ENCODE measurements at regions of chr7 and their contacts with region 1.

Region 1: GRCh38 chr7:117085769-117086463 is 132.6 kb downstream of the ST7 start:
- DNase-seq: no peak
- ATAC-seq: no peak
- H3K4me3 ChIP-seq: no peak overlapping the region
- H3K4me3 Mint-ChIP-seq: no peak overlapping the region
- H3K27ac ChIP-seq: no peak overlapping the region
- H3K27ac Mint-ChIP-seq: no peak overlapping the region
- H3K4me1 ChIP-seq: peaks cover 6% of the 10 kb centered on the region
- H3K4me1 Mint-ChIP-seq: peaks cover 42% of the 10 kb centered on the region
- H3K27me3 ChIP-seq: no peaks in the 10 kb centered on the region
- H3K27me3 Mint-ChIP-seq: no peaks in the 10 kb centered on the region
- CTCF ChIP-seq: no peak

Region 2: DNA sequence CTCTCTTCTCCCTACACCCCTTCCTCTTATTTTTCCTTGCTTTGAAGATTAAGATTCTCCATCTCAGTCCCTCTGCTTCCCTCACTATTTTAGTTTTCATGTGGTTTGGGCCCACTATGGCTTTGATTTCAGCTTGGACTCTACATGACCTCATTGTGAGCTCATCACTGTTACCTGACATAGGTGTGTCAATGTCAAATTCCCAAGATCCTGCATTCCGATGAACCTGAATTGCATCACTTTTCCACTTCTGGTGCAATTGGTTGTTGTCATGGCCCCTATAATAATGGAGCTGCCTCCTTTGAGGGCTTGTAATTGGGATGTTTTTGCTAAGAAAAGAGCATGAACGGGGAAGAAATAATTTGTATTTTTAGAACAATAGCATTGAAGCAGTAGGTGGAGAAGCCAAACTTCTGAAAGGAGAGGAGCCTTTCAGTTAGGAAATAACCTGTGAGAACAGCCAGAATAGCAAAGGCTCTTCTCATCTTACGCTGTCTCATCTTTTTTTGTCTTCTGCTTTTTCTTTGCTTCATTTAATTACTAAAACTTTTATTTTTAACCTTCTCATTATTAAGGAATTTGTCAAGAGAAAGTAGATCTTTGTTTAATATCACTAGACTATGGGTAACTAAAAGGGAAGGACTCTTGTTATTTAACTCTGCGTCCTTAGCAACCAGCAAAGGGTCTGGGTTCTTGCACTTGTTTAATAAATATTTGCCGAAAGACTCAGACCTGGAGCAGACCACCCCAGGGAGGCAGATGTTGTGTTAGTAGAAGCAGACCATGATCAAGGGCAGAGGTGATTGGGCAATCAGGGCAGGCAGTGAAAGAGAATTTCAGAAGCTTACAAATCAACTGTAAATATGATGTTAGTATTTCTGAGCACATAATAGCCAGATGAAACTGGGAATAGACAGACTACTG is 780.2 kb before region 1 on chr7:
- CTCF ChIA-PET with region 1: no interaction called
- POLR2A ChIA-PET with region 1: no interaction called
- intact Hi-C with region 1: no loop called
- DNase-seq: no peak
- ATAC-seq: no peak
- H3K4me3 ChIP-seq: no peak overlapping the region
- H3K4me3 Mint-ChIP-seq: no peak overlapping the region
- H3K27ac ChIP-seq: no peak overlapping the region
- H3K27ac Mint-ChIP-seq: no peak overlapping the region
- H3K4me1 ChIP-seq: no peaks in the 10 kb centered on the region
- H3K4me1 Mint-ChIP-seq: no peaks in the 10 kb centered on the region
- H3K27me3 ChIP-seq: peaks cover 0 to 4% of the 10 kb centered on the region in 2 experiments
- H3K27me3 Mint-ChIP-seq: peaks cover 9% of the 10 kb centered on the region
- CTCF ChIP-seq: no peak

Region 3: GRCh38 chr7:117034851-117035464 is 51.0 kb before region 1 on chr7:
- CTCF ChIA-PET with region 1: no interaction called
- POLR2A ChIA-PET with region 1: no interaction called
- intact Hi-C with region 1: loop called in 1 of 2 experiments (anchors 2 kb)
- DNase-seq: no peak
- ATAC-seq: no peak
- H3K4me3 ChIP-seq: no peak overlapping the region
- H3K4me3 Mint-ChIP-seq: no peak overlapping the region
- H3K27ac ChIP-seq: no peak overlapping the region
- H3K27ac Mint-ChIP-seq: no peak overlapping the region
- H3K4me1 ChIP-seq: no peaks in the 10 kb centered on the region
- H3K4me1 Mint-ChIP-seq: no peaks in the 10 kb centered on the region
- H3K27me3 ChIP-seq: no peaks in the 10 kb centered on the region
- H3K27me3 Mint-ChIP-seq: no peaks in the 10 kb centered on the region
- CTCF ChIP-seq: no peak

Region 4: DNA sequence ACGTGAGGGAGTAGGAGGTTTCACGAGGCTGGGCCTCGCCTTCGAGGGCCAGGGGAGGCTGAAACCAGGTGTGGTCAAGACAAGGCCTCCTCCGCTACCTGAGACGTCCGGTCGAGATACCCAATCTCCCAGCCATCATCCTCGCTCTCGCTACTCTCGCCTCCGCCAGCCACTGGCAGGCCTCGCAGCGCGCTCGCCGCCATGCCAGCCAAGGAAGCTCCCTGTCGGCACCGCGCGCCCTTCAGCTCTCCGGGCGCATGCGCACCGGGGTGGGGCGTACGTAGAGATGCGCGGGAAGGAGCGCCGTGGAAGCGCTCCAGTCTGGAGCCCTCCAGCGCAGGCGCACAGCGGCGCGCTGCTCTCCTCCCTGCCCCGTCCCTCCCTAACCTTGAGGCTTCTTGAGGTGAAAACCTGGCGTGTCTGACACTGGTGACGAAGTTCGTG is 341.4 kb after region 1 on chr7 and contains the start of gene ASZ1:
- CTCF ChIA-PET with region 1: no interaction called
- POLR2A ChIA-PET with region 1: no interaction called
- intact Hi-C with region 1: no loop called
- DNase-seq: no peak
- ATAC-seq: no peak
- H3K4me3 ChIP-seq: no peak within 1 kb of the TSS
- H3K4me3 Mint-ChIP-seq: no peak within 1 kb of the TSS
- H3K27ac ChIP-seq: no peak within 1 kb of the TSS
- H3K27ac Mint-ChIP-seq: no peak within 1 kb of the TSS
- H3K4me1 ChIP-seq: no peaks in the 10 kb centered on the region
- H3K4me1 Mint-ChIP-seq: no peaks in the 10 kb centered on the region
- H3K27me3 ChIP-seq: no peaks in the 10 kb centered on the region
- H3K27me3 Mint-ChIP-seq: no peaks in the 10 kb centered on the region
- CTCF ChIP-seq: no peak
- total RNA-seq, gene ASZ1: not detected